ENCODE measurements at regions of chr1 and their contacts with region 1.

Region 1: GRCh38 chr1:34786521-34787325 is 5.7 kb downstream of the GJB3 start:
- DNase-seq: peak; percentile 80
- ATAC-seq: peak; percentile 73 to 82

Region 2: GRCh38 chr1:34852677-34853217 is 66.0 kb after region 1 on chr1:
- intact Hi-C with region 1: loop called (anchors 2 to 5 kb)
- DNase-seq: peak; percentile 88
- ATAC-seq: peak; percentile 93 to 94

Measured in left cardiac atrium (tissue), 4 donors.